ENCODE measurements at regions of chr1 and their contacts with region 1.

Region 1: DNA sequence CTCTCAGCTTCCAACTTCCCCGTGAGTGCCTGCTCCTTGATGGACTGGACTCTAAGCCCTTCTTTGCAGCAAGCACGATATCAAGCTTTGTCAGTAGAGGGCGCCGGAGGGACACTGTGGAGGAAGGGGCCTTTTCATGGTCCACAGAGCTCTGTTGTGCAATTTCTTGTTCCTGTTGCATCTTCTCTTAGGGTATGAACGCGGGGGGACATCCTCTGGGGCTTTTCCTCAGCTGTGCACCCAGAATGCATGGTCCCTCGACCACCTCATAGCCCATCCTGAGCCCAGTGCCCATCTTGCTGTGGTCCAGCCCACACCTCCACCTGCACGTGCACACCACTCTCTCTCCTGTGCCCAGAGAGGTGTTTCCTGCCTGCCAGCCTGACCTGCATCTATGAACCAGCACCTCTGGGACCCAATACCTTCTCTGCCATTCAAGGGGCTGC is 556.8 kb downstream of the PTPRU start:
- DNase-seq: peak; percentile 89

Region 2: DNA sequence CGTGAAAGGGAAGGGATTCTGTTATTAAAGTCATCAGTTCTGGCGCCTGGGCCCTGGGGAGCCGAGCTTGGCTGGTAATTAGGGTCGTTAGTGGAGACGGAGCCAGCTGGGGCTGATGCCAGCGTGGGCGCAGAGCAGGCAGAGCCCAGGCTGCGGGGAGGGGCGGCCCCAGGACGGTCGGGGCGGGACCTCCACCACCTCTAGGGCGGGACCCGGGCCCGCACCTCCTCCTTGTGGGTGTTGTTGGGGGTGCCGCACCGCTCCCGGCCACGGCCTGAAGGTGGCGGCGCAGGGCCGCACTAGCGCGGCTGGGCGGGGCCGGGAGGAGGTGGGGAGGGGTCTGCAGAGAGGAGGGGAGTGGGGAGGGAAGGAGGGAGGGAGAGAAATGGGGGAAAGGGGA is 86.2 kb before region 1 on chr1:
- intact Hi-C with region 1: no loop called
- DNase-seq: peak; percentile 74

Region 3: GRCh38 chr1:30085811-30086770 is 293.0 kb after region 1 on chr1:
- intact Hi-C with region 1: loop called (anchors 2 kb)
- DNase-seq: no peak

Region 4: GRCh38 chr1:30106125-30106524 is 313.0 kb after region 1 on chr1:
- intact Hi-C with region 1: loop called (anchors 5 kb)
- DNase-seq: no peak

Region 5: DNA sequence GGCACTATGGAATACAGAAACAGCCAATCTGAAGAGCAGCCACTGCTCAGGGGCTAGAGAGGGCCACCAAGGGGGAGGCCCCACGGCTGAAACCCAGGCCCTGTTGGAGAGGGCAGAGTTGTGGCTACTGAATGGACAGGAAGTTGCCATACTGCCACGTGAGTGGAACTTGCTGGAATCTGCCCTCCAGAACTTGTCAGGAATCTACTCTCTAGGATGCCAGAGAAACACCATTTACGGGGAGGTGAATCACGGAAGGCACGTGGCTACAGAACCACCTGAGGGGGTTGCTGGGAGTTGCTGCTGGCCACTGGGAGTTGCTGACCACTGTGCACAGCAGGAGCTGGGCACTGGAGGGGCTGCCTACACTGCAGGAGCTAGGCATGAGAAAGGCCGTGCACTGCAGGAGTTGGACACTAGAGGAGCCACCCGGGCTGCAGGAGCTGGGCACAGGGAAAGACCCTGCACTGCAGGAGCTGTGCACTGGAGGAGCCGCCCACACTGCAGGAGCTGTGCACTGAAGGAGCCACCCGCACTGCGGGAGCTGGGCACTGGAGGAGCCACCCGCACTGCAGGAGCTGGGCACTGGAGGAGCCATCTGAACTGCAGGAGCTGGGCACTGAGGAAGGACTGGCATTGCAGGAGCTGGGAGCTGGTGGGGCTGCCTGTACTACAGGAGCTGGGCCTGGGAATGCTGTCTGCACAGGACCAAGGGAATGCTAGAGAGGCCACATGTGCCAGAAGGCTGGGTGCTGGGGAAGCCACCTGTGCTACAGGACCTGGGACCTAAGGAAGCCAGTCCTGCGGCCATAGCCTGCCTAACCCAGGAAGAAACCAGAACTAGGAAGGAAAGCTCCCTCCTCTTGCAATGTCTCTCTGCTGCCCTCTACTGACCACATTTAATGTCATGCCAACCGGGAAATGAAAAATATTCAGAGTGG is 586.8 kb after region 1 on chr1:
- intact Hi-C with region 1: loop called (anchors 10 kb)
- DNase-seq: peak; percentile 70

Region 6: DNA sequence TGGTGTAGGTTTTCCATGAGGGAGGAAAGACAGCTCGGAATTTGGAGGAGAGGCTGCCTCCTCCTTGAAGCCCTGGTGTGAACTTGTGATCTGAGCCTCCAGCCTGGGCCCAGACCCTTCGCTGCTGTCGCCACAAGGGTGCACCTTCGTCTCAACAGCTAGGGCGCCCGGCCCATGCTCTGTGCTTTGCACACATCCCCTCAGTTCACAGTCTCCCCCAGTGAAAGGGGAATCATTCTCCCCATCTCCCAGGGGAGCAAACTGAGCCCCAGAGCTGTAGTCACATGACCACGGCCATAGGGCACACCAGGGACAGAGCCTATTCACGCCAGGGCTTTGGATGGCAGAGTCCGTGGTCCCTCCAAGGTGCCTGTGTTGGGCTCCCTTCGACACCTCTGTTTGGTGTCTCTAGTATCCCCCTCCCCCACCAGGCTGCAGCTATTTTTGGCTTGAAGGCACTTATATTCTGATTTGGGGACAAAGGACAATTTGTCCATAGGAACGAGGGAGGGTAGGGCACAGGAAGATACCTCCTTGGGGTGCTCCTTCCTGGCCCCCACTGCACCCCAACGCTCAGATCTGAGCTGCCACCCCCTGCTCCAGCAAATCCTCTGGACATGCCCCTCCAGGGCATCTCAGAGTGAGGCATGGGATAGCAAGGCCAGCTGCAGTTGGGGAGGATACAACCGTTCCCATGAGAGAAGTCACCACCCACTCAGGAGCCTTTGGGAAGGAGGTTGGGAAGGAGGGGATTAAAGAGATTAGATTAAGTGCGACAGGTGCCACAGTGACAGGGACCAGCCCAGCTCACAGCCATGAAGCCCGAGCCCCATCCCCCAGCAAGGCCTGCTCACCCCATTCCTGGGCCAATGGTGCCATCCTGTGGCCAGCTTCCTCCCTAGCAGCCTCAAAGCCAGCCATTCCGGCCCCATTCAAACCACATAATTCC is 914.6 kb after region 1 on chr1:
- intact Hi-C with region 1: loop called (anchors 10 kb)
- DNase-seq: peak; percentile 86

Measured in cardiac septum (tissue), 1 donor.